ENCODE measurements at regions of chr19 and their contacts with region 1.

Region 1: GRCh38 chr19:54439174-54439853 is 9.7 kb upstream of the LENG8 start:
- DNase-seq: peak; percentile 64 to 69
- ATAC-seq: peak; percentile 89 to 95
- H3K4me3 ChIP-seq: no peak overlapping the region
- H3K27ac ChIP-seq: no peak overlapping the region
- H3K4me1 ChIP-seq: no peaks in the 10 kb centered on the region
- CTCF ChIP-seq: peak; percentile 51
- EP300 ChIP-seq: no peak
- POLR2A ChIP-seq: no peak
- RAD21 ChIP-seq: peak in 1 of 2 experiments; percentile 51; a peak in 2 of 5 replicates

Region 2: GRCh38 chr19:54420383-54421168 is 18.7 kb before region 1 on chr19:
- CTCF ChIA-PET with region 1: interaction called, 13 read pairs
- POLR2A ChIA-PET with region 1: no interaction called
- DNase-seq: peak in 1 of 2 experiments; percentile 63
- ATAC-seq: peak in 1 of 2 experiments; percentile 37; a peak in 3 of 6 replicates
- H3K4me3 ChIP-seq: no peak overlapping the region
- H3K27ac ChIP-seq: peak overlapping the region; percentile 11 to 72; a peak in 4 of 6 replicates
- H3K4me1 ChIP-seq: peaks cover 19% of the 10 kb centered on the region; the same call in 2 of the 3 replicates
- CTCF ChIP-seq: no peak
- EP300 ChIP-seq: no peak
- POLR2A ChIP-seq: no peak
- RAD21 ChIP-seq: no peak

Region 3: DNA sequence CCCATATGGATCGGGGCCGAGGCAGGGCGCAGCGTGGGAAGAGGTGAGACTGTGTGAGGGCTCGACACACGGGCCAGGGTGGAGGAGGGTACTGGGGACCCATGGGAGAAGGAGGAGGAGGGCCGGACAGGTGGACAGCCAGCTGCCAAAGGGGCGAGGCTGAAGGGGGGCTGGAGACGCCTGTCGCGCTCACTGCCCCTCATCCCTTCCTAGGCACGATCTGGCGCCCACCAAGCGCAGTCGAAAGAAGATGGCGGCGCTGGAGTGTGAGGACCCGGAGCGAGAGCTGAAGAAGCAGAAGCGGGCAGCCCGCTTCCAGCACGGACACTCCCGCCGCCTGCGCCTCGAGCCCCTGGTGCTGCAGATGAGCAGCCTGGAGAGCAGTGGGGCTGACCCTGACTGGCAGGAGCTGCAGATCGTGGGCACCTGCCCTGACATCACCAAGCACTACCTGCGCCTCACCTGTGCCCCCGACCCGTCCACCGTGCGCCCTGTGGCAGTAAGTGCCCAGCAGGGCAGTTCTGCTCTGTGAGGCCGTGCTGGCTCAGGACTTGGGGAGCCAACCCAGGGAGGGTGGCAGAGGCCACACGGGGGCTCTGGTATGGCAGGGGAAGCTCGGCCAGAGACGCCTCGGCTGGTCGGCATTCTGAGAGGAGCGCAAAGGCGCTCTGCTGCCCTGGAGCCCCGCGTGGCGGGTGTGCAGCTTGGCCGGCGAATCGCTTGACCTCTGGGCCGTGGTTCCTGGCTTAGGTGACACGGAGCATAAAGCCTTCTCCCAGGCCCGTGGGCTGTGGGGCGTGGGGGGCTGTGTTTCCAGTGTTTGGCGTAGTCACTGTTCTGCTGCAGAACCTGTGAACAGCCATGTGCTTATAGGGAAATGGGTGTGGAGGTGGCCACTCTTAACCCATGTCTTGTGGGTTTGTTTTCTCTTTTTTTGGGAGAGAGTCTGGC is 17.4 kb after region 1 on chr19:
- CTCF ChIA-PET with region 1: interaction called, 29 read pairs
- POLR2A ChIA-PET with region 1: interaction called, 4 read pairs
- DNase-seq: no peak
- ATAC-seq: 0 out of 6 replicates have a peak, but pooled peaks of 1 of the 2 experiments have one; percentile 1
- H3K4me3 ChIP-seq: no peak overlapping the region
- H3K27ac ChIP-seq: no peak overlapping the region
- H3K4me1 ChIP-seq: peaks cover 18% of the 10 kb centered on the region
- CTCF ChIP-seq: no peak
- EP300 ChIP-seq: no peak
- POLR2A ChIP-seq: no peak
- RAD21 ChIP-seq: no peak

Region 4: GRCh38 chr19:54517483-54517882 is 78.2 kb after region 1 on chr19:
- CTCF ChIA-PET with region 1: no interaction called
- POLR2A ChIA-PET with region 1: no interaction called
- DNase-seq: peak; percentile 29 to 40
- ATAC-seq: peak; percentile 63 to 66; a peak in 3 of 6 replicates
- H3K4me3 ChIP-seq: no peak overlapping the region
- H3K27ac ChIP-seq: no peak overlapping the region
- H3K4me1 ChIP-seq: no peaks in the 10 kb centered on the region
- CTCF ChIP-seq: no peak
- EP300 ChIP-seq: no peak
- POLR2A ChIP-seq: no peak
- RAD21 ChIP-seq: no peak

Region 5: DNA sequence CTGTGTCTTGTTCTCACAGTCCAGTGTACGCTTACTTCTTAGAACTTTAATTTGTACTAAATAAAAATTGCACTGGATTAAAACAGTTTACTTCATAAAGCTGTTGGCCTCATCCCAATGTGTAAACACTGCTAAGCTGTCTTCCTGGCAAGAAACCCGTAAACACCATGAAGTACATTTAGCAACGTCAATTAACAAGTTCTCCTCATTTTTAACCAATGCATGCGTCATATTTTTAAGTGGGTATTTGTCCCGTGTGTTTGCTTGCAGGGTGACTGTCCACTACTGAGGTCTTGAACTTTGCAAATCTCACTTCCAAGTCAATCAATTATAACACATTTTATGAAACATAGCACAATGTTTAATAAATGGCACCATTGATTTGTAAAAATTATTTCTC is 91.6 kb after region 1 on chr19:
- CTCF ChIA-PET with region 1: no interaction called
- POLR2A ChIA-PET with region 1: no interaction called
- DNase-seq: no peak
- ATAC-seq: no peak
- H3K4me3 ChIP-seq: no peak overlapping the region
- H3K27ac ChIP-seq: no peak overlapping the region
- H3K4me1 ChIP-seq: no peaks in the 10 kb centered on the region
- CTCF ChIP-seq: no peak
- EP300 ChIP-seq: no peak
- POLR2A ChIP-seq: no peak
- RAD21 ChIP-seq: no peak

Measured in A549 (cell line).